ENCODE measurements at regions of chr2 and their contacts with region 1.

Region 1: DNA sequence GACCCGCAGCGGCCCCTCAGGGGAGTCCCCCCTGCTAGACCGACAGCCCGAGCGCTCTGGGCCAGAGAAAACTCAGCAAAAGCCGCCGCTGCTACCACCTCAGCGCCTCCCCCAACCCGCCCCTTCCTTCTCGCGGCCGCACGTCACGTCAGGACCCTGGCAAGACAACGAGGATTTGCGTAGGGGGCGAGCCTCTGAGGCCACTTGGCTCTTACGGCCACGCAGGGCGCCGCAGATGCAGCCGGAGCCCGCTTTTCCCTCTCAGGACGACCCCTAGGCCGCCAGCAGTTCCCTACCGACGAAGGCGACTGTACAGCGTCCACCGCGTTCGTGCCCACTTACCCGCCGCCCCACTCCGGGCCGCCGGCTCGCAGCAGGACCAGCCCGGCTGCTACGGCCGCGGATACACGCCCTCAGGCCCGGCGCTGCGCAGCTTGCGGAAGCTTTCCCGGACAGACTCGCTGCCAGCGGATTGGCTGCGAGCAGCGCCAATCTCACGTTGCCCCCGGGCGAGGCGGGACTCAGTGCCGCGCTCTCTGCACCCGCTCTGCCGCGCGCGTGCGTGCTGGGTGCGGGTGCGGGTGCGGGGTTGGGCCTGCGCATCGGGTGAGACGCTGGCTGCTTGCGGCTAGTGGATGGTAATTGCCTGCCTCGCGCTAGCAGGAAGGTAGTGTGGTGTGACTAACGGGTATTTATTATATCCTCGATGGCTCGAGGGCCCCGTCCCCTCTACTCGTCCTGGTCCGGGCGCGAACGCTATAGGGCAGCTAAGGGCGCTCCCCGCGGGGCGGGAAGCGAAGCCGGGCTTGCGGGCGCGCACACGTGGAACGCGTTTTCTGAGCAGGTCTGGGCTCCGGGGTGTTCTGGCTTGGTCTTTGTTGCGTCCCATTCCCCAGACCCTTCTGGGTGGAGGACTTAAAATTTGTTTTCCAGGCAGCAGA is at the starts of genes ORMDL1 and PMS1:
- DNase-seq: peak; percentile 87 to 92
- H3K4me3 ChIP-seq: peak within 1 kb of the TSS; percentile 45 to 85 (median 68)
- H3K27ac ChIP-seq: peak within 1 kb of the TSS; percentile 95
- H3K4me1 ChIP-seq: peaks cover 0 to 3% (median 0%) of the 10 kb centered on the region in 4 experiments; a peak in 3 of 7 replicates
- H3K27me3 ChIP-seq: no peaks in the 10 kb centered on the region
- CTCF ChIP-seq: no peak
- EP300 ChIP-seq: no peak
- POLR2A ChIP-seq: peak; percentile 90 to 94
- RAD21 ChIP-seq: no peak
- total RNA-seq, gene ORMDL1: 51.6 and 58.1 TPM in 2 replicates
- total RNA-seq, gene PMS1: 59.3 and 59.7 TPM in 2 replicates

Region 2: DNA sequence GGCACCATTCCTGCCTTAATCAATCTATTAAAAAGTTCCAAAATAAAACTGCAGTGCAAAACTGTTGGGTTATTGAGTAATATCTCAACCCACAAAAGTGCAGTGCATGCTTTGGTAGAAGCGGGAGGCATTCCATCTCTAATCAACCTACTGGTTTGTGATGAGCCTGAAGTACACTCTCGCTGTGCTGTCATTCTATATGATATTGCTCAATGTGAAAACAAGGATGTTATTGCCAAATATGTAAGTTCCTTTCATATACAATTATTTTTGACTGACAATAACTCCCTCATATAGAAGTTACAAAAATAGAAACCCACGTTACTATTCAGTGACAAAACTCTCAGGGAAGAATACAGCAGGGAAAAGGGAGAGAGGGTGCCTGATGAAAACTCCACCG is 64.6 kb before region 1 on chr2:
- CTCF ChIA-PET with region 1: no interaction called
- POLR2A ChIA-PET with region 1: no interaction called
- DNase-seq: no peak
- H3K4me3 ChIP-seq: no peak overlapping the region
- H3K27ac ChIP-seq: no peak overlapping the region
- H3K4me1 ChIP-seq: no peaks in the 10 kb centered on the region
- H3K27me3 ChIP-seq: peaks cover 0 to 1% (median 0%) of the 10 kb centered on the region in 4 experiments; a peak in 1 of 7 replicates
- CTCF ChIP-seq: no peak
- EP300 ChIP-seq: no peak
- POLR2A ChIP-seq: no peak
- RAD21 ChIP-seq: no peak

Region 3: GRCh38 chr2:189762551-189763298 is 21.5 kb before region 1 on chr2 and contains the start of gene OSGEPL1:
- CTCF ChIA-PET with region 1: interaction called, 13 read pairs
- POLR2A ChIA-PET with region 1: interaction called, 17 read pairs
- DNase-seq: peak; percentile 87 to 91
- H3K4me3 ChIP-seq: peak within 1 kb of the TSS; percentile 81 to 91 (median 88)
- H3K27ac ChIP-seq: peak within 1 kb of the TSS; percentile 85
- H3K4me1 ChIP-seq: no peaks in the 10 kb centered on the region; a peak in 1 of 7 replicates
- H3K27me3 ChIP-seq: no peaks in the 10 kb centered on the region
- CTCF ChIP-seq: peak; percentile 15 to 68 (median 36); a peak in 3 of 4 replicates
- EP300 ChIP-seq: no peak
- POLR2A ChIP-seq: peak; percentile 49 to 95
- RAD21 ChIP-seq: peak in 1 of 2 experiments; percentile 9; a peak in 1 of 4 replicates
- total RNA-seq, gene OSGEPL1: 11.8 and 15.7 TPM in 2 replicates

Region 4: GRCh38 chr2:189794308-189794707 is 10.1 kb after region 1 on chr2:
- CTCF ChIA-PET with region 1: interaction called, 4 read pairs
- POLR2A ChIA-PET with region 1: interaction called, 13 read pairs
- DNase-seq: no peak
- H3K4me3 ChIP-seq: no peak overlapping the region
- H3K27ac ChIP-seq: no peak overlapping the region
- H3K4me1 ChIP-seq: no peaks in the 10 kb centered on the region
- H3K27me3 ChIP-seq: no peaks in the 10 kb centered on the region
- CTCF ChIP-seq: no peak
- EP300 ChIP-seq: no peak
- POLR2A ChIP-seq: no peak
- RAD21 ChIP-seq: no peak

Region 5: DNA sequence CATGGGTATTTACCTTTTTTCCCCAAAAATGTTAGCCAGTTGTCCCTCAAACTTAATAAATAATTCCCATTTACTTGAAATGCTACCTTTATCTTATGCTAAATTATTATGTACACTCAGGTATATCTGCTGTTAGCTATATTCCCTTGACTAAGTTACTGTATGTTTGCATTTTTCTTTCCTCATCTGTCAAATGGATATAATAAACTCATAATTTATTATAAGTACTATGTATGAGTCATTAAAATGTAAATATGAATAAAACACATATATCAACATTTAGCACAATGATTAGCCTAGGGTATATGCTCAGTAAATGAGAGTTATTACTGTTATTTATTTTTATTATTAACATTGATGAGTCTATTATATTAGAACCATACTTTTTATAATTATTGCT is 117.5 kb after region 1 on chr2:
- CTCF ChIA-PET with region 1: no interaction called
- POLR2A ChIA-PET with region 1: no interaction called
- DNase-seq: no peak
- H3K4me3 ChIP-seq: no peak overlapping the region
- H3K27ac ChIP-seq: no peak overlapping the region
- H3K4me1 ChIP-seq: no peaks in the 10 kb centered on the region
- H3K27me3 ChIP-seq: no peaks in the 10 kb centered on the region
- CTCF ChIP-seq: no peak
- EP300 ChIP-seq: no peak
- POLR2A ChIP-seq: no peak
- RAD21 ChIP-seq: no peak

Region 6: GRCh38 chr2:190182071-190182524 is 397.9 kb after region 1 on chr2:
- CTCF ChIA-PET with region 1: no interaction called
- POLR2A ChIA-PET with region 1: no interaction called
- DNase-seq: no peak
- H3K4me3 ChIP-seq: no peak overlapping the region
- H3K27ac ChIP-seq: no peak overlapping the region
- H3K4me1 ChIP-seq: peaks cover 0 to 2% (median 0%) of the 10 kb centered on the region in 4 experiments; a peak in 1 of 7 replicates
- H3K27me3 ChIP-seq: peaks cover 0 to 8% (median 4%) of the 10 kb centered on the region in 4 experiments; a peak in 4 of 7 replicates
- CTCF ChIP-seq: no peak
- EP300 ChIP-seq: no peak
- POLR2A ChIP-seq: no peak
- RAD21 ChIP-seq: no peak

Region 7: DNA sequence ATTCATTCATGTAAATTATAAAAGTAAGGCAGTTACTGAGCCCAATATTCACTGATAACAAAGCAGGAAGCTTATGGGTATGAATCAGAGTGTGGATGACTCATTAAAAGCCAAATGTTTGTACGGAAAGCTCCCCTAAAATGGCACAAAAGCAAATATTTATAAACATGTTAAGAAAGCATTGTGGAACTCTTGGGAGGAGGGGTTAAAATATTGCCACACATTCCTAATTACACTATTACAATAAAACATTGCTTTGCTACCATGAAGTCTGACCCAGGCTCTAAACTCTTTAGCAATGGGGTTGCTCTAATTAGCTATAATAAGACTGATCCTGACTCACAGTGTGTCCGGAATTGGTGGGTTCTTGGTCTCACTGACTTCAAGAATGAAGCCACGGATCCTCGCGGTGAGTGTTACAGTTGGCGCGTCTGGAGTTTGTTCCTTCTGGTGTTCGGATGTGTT is 975.6 kb after region 1 on chr2:
- CTCF ChIA-PET with region 1: no interaction called
- POLR2A ChIA-PET with region 1: no interaction called
- DNase-seq: no peak
- H3K4me3 ChIP-seq: no peak overlapping the region
- H3K27ac ChIP-seq: no peak overlapping the region
- H3K4me1 ChIP-seq: peaks cover 0 to 6% (median 0%) of the 10 kb centered on the region in 4 experiments; a peak in 1 of 7 replicates
- H3K27me3 ChIP-seq: no peaks in the 10 kb centered on the region
- CTCF ChIP-seq: no peak
- EP300 ChIP-seq: no peak
- POLR2A ChIP-seq: no peak
- RAD21 ChIP-seq: no peak